Endothelial cell of umbilical vein (primary cell): ENCODE measurements at regions of chr6 and their contacts with region 1.

Region 1: GRCh38 chr6:85593438-85594196 is at the start of gene SNX14:
- DNase-seq: peak; percentile 97
- H3K4me3 ChIP-seq: peak within 1 kb of the TSS; percentile 80 to 96 (median 92)
- H3K27ac ChIP-seq: peak within 1 kb of the TSS; percentile 82
- H3K4me1 ChIP-seq: peaks cover 16% of the 10 kb centered on the region
- H3K27me3 ChIP-seq: no peaks in the 10 kb centered on the region
- CTCF ChIP-seq: peak in 1 of 2 donors; percentile 2
- POLR2A ChIP-seq: peak; percentile 61
- total RNA-seq, gene SNX14: 64.9 and 74.3 TPM in 2 replicates

Region 2: GRCh38 chr6:85476532-85476931 is 117.1 kb before region 1 on chr6:
- CTCF ChIA-PET with region 1: no interaction called
- POLR2A ChIA-PET with region 1: no interaction called
- dilution Hi-C with region 1: no loop called
- intact Hi-C with region 1: no loop called
- DNase-seq: no peak
- H3K4me3 ChIP-seq: no peak overlapping the region
- H3K27ac ChIP-seq: no peak overlapping the region
- H3K4me1 ChIP-seq: no peaks in the 10 kb centered on the region
- H3K27me3 ChIP-seq: no peaks in the 10 kb centered on the region
- CTCF ChIP-seq: no peak
- POLR2A ChIP-seq: no peak

Region 3: DNA sequence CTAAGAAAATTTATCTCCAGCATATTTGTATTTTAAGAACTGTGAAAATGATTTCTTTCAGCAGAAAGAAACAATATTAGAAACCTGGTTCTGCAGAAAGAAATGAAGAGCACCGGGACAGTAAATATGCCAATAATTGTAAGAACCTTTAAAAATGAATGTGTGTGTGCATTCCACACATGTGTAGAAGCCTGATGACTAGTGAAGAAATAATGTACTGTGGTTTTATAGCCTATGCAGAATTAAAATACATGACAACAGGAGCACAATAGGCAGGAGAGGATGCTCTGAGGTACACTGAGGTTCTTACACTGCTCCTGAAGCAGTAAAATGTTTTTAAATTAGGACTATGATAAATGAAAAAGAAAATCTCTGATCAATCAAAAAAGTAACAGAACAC is 48.8 kb before region 1 on chr6:
- CTCF ChIA-PET with region 1: no interaction called
- POLR2A ChIA-PET with region 1: interaction called, 10 read pairs
- dilution Hi-C with region 1: no loop called
- intact Hi-C with region 1: no loop called
- DNase-seq: no peak
- H3K4me3 ChIP-seq: no peak overlapping the region
- H3K27ac ChIP-seq: no peak overlapping the region
- H3K4me1 ChIP-seq: no peaks in the 10 kb centered on the region
- H3K27me3 ChIP-seq: no peaks in the 10 kb centered on the region
- CTCF ChIP-seq: no peak
- POLR2A ChIP-seq: no peak

Region 4: DNA sequence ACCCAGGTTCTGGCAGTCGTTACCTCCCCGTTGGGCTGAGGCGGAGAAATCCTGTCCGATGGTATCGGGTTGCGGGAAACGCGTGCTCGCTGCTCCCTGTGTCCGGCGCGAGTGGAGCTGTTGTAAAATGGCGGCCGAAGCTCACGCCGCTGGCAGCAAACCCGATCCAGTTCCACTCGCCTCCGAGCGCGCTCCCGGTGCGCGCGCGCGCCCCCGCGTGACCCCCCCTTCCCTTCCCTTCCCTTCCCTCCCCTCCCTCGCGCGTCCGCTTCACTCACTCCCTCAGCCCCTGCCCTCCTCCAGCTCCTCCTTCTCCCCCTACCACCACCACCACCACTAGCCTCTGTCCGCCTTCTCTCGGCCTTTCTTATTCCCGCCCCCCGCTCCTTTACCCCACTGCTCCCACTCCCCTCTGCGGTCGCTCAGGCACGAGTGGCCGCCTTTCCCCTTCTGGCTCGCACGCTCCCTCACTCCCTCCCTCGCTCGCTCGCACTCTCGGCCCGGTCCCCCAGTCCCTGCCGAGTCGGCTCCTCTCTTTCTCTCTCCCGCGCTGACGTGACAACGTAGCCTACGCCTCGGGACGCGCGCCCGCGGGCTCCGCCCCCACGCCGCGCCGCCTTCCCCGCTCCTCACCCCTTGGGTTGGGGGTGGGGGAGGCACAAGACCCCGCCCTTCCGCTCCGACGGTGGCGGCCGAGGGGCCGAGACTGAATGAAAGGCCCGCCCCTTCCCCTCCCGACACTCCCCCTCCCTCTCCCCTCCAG is 49.3 kb after region 1 on chr6 and contains the start of gene SYNCRIP:
- CTCF ChIA-PET with region 1: no interaction called
- POLR2A ChIA-PET with region 1: interaction called, 3 read pairs
- dilution Hi-C with region 1: no loop called
- intact Hi-C with region 1: loop called (anchors 1 kb)
- DNase-seq: peak; percentile 99
- H3K4me3 ChIP-seq: peak within 1 kb of the TSS; percentile 87 to 91 (median 90)
- H3K27ac ChIP-seq: peak within 1 kb of the TSS; percentile 100
- H3K4me1 ChIP-seq: peaks cover 27% of the 10 kb centered on the region
- H3K27me3 ChIP-seq: no peaks in the 10 kb centered on the region
- CTCF ChIP-seq: no peak
- POLR2A ChIP-seq: peak; percentile 97
- total RNA-seq, gene SYNCRIP: 150 and 155 TPM in 2 replicates

Region 5: DNA sequence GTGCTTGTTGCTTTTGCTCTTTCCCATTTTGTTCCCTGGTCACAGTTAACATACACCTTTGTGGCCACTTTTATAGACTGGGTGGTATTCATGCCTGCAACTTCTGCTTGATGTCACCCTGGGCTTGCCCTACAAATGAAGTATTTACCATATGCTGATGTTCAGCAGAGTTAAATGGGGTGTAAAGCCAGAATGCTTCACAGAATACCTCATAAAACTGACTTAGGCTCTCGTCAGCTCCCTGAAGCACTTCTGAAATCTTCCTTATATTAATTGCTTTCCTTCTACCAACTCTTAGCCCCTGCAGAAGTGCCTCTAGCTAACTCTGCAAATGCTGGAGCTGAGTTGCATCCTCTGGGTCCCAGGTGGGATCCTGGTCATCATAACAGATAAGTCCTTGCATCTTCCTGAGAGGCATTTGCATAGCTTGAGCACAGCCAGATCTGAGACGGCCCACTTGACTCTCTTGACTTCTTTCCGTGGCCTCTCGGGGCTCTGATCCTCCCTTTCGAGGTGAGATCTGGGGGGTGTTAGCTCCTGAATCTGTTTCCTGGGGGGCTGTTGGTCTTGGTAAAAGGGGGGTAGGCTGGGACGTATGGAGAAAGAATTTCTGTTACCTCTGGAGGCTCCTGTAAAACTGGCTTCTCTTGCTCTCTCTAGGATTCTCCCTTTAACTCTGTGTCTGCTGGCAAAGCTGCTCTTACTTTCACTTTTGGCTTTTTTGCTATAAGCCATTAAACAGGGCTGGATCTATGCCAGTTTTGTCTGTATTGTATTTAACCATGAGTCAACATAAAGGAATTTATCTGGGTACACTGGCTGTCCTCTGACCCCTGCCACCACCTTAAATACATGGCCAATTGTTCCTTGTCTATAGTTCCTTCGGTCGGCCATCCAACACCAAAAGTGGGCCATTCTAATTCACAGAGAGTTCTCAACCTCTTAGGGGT is 272.1 kb after region 1 on chr6:
- CTCF ChIA-PET with region 1: no interaction called
- POLR2A ChIA-PET with region 1: no interaction called
- dilution Hi-C with region 1: no loop called
- intact Hi-C with region 1: loop called (anchors 2 kb)
- DNase-seq: peak; percentile 85
- H3K4me3 ChIP-seq: peak overlapping the region; percentile 33 to 73 (median 72)
- H3K27ac ChIP-seq: peak overlapping the region; percentile 83
- H3K4me1 ChIP-seq: peaks cover 23% of the 10 kb centered on the region
- H3K27me3 ChIP-seq: no peaks in the 10 kb centered on the region
- CTCF ChIP-seq: no peak
- POLR2A ChIP-seq: no peak